Right ventricle myocardium inferior (tissue), 1 donor: ENCODE measurements at regions of chr9 and their contacts with region 1.

Region 1: DNA sequence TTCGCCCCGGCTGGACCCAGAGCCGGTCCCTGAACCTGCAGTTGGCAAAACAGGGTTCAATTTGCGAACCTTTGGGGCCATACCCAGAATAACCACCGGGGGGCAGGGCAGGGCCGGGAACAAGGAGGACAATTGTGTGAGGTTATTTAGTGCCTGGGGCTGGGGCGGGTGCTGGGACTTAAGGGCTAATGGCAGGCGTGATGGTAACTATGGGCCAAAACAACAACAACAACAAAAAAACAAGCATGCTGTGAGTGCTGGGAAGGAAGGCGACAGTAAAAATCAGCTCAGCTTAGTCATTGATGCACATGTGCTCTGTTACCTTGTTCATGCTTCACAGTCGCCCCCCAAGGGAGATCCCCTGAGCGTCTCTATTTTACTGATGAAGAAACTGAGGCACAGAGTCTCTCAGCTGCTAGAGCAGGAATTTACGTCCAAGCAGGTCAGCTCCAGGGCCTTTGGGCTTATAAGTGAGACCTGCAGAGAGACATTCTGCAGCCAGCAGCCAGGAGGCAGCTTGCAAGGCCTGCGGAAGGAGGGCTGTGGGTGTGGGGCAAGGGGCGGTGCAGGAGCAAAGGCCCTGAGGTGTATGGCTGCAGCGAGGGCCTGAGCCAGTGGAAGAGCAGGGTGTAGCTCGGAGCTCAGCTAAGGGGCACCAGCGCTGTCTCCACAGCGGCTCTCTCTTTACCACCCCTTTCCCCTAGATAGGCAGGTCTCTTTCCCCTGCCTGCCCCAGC is 106.0 kb downstream of the PHF2 start:
- DNase-seq: no peak
- ATAC-seq: no peak

Region 2: GRCh38 chr9:93612796-93613154 is 69.6 kb before region 1 on chr9:
- intact Hi-C with region 1: no loop called
- DNase-seq: no peak
- ATAC-seq: no peak

Region 3: GRCh38 chr9:93908591-93909511 is 226.5 kb after region 1 on chr9:
- intact Hi-C with region 1: no loop called
- DNase-seq: no peak
- ATAC-seq: no peak

Region 4: DNA sequence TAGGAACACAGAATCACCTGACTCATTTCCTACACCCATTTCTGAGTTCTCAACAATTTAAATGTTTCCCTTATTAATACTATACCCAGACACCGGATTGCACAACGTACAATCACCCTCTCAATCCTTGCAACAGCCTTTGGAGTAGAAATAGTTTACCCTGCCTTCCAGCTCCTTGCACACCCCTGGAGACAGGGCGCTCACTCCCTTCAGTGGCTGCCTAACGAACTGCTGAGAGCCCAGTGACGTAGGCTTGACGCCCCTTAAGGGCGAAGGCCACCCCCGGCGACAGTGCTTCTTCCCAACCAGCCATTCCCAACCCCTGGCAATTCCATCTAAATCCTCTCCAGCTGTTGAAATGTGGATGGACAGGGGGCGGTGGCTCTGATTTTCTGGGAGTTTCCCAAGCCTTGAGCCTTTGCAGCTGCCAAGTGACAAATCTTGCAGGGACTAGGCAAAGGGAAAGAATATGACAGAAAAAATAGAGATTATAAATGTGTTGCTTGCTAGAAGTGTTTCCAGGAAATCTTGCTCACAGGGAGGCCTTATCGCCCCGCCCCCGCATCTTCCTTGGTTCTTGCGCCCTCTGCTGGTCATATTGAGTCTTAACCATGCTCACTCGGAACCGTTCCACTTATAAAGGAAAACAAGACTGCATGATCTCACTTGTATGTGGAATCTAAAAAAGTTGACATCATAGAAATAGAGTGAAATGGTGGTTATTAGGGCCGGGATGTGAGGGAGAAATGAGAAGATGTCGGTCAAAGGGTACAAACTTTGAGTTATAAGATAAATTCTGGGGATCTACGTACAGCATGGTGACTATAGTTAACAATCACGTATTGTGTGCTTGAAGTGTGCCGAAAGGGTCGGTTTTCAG is 280.4 kb after region 1 on chr9:
- intact Hi-C with region 1: loop called (anchors 1 kb)
- DNase-seq: peak; percentile 85
- ATAC-seq: peak; percentile 83

Region 5: DNA sequence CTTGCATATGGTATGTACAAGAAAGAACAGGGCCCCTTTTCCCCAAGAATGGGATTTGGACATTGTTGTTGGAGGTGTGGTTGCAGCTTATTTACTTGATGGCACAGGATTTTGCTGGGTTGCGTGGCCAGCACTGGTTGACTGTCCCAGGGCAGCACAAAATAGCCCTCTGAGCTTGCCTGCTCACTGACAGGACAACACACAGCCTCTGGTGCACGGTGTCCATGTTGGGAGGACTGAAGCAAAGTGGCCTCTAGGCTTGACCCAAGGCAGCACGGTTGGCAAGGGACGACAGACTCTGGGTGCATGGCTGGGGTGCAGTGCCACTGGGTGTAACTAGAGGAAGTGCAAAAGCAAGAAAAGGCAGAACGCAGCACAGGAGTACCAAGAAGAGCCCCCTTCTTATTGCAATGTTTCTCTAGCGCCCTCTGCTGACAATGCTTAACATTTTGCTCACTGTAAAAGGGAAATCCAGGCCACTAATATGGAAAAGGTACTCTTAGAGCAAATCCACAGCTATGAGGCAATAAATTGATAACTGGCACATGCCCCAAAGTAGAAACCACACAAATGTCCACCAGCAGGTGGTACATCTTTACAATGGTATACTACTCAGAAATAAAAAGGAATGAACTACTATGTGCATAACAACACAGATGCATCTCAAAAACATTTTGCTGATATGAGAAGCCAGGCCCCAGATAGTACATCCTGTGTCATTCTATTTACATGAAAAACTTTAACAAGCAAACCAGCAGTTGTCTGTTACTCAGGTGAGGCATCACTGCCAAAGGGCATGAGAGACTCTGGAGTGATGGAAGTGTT is 320.1 kb after region 1 on chr9:
- intact Hi-C with region 1: loop called (anchors 5 kb)
- DNase-seq: no peak
- ATAC-seq: peak; percentile 23